ENCODE measurements at regions of chr12 and their contacts with region 1.

Region 1: DNA sequence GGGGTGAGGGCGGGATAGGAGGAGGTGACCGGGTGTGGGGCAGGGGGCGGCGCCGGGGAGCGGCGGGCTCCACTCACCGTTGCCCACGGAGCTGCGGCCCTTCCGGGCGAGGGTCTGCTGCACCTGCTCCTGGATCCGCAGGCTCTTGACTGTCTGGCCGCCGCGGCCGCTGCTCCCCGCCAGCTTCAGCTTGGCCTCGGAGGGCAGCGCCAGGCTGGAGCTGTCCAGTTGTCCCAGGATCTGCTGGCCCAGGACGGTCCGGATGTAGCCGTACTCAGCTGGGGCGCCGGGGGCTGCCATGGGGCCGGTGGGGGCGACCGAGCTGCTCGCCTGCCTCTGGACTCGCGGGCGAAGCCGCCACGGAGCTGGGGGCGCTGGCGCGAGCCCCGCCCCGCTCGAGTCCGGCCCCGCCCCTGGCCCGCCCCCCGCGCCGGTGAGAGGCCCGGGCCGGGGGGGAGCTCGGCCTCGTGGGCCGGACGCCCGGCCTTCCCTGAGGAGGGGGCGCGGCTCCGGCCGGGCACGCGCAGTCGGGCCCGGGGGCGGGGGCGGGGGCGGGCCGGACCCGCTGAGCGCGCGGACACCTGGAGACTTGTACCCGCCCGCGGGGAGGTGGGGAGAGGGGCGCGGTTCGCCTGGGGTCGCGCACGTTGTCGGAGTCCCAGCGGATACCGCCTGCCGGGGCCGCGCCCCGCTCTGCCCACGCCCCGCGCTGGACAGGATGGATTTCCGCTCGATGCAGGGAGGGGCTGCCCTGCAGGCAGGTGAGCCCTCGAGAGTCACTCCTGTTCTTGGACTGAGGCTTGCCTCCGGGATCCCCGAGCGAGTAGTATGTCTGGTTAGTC is at the start of gene PKP2:
- DNase-seq: peak; percentile 98 to 100
- H3K4me3 ChIP-seq: peak within 1 kb of the TSS; percentile 93
- H3K27ac ChIP-seq: peak within 1 kb of the TSS; percentile 74
- H3K4me1 ChIP-seq: peaks cover 66% of the 10 kb centered on the region
- H3K27me3 ChIP-seq: no peaks in the 10 kb centered on the region
- CTCF ChIP-seq: no peak
- total RNA-seq, gene PKP2: 88.1 and 88.7 TPM in 2 replicates

Region 2: GRCh38 chr12:31749024-31749704 is 1147.5 kb before region 1 on chr12:
- CTCF ChIA-PET with region 1: no interaction called
- POLR2A ChIA-PET with region 1: no interaction called
- intact Hi-C with region 1: loop called (anchors 10 kb)
- DNase-seq: peak; percentile 83 to 98
- H3K4me3 ChIP-seq: peak overlapping the region; percentile 5; the same call in 1 of the 2 replicates
- H3K27ac ChIP-seq: peak overlapping the region; percentile 89
- H3K4me1 ChIP-seq: peaks cover 29% of the 10 kb centered on the region
- H3K27me3 ChIP-seq: no peaks in the 10 kb centered on the region
- CTCF ChIP-seq: no peak

Region 3: DNA sequence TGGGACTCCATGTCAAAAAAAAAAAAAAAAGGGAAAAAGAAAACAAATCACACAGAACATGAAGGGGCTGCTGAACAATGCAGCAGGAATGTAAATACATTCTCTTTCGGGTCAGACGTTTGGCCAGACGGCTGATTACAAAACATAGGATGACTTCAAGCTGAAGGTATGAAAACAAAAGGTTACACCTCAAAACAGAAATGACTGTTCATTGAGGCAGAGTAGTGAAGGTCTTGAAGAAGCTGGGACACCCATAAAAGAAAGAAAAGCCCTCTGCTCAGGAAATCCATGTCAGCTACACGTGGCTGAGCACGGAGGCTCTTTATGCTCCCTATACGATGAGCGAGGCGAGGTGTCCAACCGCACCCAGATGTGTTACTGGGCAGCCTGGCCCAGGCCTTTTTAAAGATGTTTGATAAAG is 459.5 kb before region 1 on chr12:
- CTCF ChIA-PET with region 1: no interaction called
- POLR2A ChIA-PET with region 1: no interaction called
- intact Hi-C with region 1: loop called (anchors 5 kb)
- DNase-seq: peak; percentile 76 to 97
- H3K4me3 ChIP-seq: peak overlapping the region; percentile 28; the same call in 1 of the 2 replicates
- H3K27ac ChIP-seq: peak overlapping the region; percentile 81
- H3K4me1 ChIP-seq: peaks cover 41% of the 10 kb centered on the region
- H3K27me3 ChIP-seq: no peaks in the 10 kb centered on the region
- CTCF ChIP-seq: no peak

Region 4: DNA sequence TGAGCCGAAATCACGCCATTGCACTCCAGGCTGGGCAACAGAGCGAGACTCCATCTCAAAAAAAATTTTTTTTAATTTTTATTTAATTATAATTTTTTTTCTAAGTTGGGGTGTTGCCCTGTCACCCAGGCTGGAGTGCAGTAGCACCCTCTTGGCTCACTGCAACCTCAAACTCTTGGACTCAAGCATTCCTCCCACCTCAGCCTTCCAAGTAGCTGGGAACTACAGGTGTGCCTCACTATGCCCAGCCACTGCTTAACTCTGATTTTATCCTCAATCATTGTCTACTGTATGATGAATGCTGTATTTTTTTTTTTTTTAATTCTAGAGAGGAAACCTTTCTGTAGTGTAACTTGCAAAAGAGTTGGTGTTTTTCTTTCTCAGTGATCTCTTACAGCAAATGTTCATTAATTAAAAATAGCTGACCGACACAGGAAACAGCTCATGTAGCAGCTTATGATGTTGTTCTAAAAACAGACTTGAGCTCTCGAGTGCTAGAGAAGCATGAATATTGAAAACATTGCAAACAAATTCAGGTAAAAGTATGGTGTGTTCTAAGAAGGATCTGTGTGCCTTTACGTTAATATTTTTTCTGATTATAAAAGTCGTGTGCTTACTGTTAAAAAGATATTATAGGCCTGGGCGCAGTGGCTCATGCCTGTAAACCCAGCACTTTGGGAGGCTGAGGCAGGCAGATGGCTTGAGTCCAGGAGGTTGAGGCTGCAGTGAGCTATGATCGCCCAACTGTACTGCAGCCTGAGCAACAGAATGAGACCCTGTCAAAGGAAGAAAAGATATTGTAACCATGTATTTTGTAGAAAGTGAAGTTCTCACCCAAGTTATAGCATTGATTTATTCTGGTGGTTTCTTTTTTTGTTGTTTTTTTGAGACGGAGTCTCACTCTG is 428.4 kb before region 1 on chr12:
- CTCF ChIA-PET with region 1: no interaction called
- POLR2A ChIA-PET with region 1: no interaction called
- intact Hi-C with region 1: no loop called
- DNase-seq: no peak
- H3K4me3 ChIP-seq: no peak overlapping the region
- H3K27ac ChIP-seq: no peak overlapping the region
- H3K4me1 ChIP-seq: no peaks in the 10 kb centered on the region
- H3K27me3 ChIP-seq: no peaks in the 10 kb centered on the region
- CTCF ChIP-seq: no peak

Region 5: DNA sequence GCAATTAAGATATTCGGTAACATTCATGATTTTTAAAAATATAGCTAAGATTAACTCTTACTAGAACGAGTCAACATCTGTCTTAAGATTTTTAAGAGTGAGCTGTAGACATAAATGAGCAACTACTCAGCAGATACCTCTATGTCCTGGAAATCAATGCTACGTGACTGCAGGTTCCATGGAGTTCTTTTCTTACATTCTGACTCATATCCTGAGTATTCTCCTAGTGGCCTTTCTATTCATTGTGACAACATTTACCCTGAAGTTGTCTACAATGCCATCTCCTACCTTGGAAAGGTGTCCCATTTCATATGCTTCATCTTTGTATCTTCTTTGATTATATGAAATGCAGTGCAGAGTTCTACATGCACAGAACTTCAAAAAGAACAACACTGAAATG is 59.9 kb before region 1 on chr12:
- CTCF ChIA-PET with region 1: no interaction called
- POLR2A ChIA-PET with region 1: no interaction called
- intact Hi-C with region 1: loop called (anchors 1 kb)
- DNase-seq: peak in 1 of 2 experiments; percentile 52
- H3K4me3 ChIP-seq: no peak overlapping the region
- H3K27ac ChIP-seq: no peak overlapping the region
- H3K4me1 ChIP-seq: peaks cover 10% of the 10 kb centered on the region; the same call in 1 of the 2 replicates
- H3K27me3 ChIP-seq: no peaks in the 10 kb centered on the region
- CTCF ChIP-seq: no peak

Region 6: DNA sequence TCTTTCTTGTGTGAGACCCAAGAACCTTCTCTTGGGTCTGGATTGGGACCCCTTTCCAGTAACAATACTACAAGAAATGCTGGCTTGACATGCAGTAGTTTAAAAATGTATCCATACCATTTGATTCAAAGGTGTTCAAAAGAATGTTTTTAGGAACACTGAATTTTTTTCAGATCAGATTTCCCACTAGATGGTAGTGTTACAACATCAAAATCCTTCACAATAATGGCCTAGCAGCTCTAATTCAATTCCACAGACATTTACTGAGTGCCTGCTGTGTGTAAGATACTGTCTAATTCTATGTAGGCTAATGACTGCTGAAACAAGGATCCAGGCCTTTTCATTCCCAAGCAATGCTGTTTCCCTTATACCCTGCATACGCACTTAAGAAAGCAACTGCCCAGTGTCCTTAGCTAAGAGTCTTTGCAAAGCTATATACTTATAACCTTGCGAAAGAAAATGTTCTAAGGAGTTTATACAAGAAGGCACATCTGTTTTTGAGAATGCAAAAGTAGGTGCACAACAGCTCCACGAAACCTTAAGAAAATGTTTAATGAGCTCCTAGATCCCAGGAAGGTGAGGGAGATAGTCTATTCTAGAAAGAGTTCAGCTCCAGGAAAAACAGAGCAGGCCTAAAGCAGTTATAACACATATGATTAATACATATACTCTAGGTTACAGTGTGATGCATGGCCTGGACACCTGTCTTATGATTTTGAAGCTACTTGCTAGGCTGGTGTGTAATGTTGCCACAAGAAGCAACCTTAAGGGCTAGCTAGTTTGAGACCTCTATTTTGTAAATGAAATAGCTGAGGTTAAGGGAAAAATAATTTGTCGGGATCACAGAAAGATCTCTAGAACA is 50.8 kb after region 1 on chr12:
- CTCF ChIA-PET with region 1: interaction called, 3 read pairs
- POLR2A ChIA-PET with region 1: interaction called, 4 read pairs
- intact Hi-C with region 1: loop called (anchors 1 kb)
- DNase-seq: peak; percentile 14 to 50
- H3K4me3 ChIP-seq: no peak overlapping the region
- H3K27ac ChIP-seq: no peak overlapping the region
- H3K4me1 ChIP-seq: peaks cover 21% of the 10 kb centered on the region
- H3K27me3 ChIP-seq: no peaks in the 10 kb centered on the region
- CTCF ChIP-seq: peak; percentile 66

Region 7: DNA sequence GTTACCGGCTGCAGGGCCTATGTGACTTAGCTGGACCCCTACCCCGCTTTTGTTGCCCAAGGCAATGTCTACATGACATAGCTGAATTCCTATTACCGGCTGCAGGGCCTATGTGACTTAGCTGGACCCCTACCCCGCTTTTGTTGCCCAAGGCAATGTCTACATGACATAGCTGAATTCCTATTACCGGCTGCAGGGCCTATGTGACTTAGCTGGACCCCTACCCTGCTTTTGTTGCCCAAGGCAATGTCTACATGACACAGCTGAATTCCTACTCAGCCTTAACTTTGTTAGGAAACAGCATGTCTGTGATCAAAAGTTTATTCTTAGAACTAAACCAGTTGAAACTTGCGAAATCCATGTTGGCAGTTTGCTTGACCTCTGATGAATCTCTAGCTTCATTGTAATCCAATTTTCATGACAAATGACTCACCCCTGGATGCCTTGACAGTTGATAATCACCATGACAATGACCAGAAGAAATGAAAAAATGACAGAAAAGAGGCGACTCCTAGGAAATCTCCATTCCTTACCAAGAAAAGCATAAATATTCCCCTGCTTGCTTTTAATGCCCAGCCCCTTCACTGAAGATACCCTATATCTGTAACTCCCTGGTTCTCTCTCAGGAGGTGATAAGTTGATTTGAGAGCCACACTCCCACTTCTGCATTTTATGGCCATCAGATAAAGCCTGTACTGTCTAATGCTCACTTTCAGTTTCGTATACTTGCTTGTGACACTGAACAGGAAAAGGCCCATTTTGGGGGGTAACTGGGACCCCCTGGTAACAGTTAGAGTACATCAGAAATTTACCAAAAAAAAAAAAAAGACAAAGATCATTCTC is 691.4 kb after region 1 on chr12:
- CTCF ChIA-PET with region 1: no interaction called
- POLR2A ChIA-PET with region 1: no interaction called
- intact Hi-C with region 1: loop called (anchors 2 kb)
- DNase-seq: peak; percentile 66 to 97
- H3K4me3 ChIP-seq: peak overlapping the region; percentile 38; the same call in 1 of the 2 replicates
- H3K27ac ChIP-seq: peak overlapping the region; percentile 96
- H3K4me1 ChIP-seq: peaks cover 50% of the 10 kb centered on the region
- H3K27me3 ChIP-seq: no peaks in the 10 kb centered on the region
- CTCF ChIP-seq: no peak

Measured in PC-9 (cell line).